ENCODE measurements at regions of chr9 and their contacts with region 1.

Region 1: DNA sequence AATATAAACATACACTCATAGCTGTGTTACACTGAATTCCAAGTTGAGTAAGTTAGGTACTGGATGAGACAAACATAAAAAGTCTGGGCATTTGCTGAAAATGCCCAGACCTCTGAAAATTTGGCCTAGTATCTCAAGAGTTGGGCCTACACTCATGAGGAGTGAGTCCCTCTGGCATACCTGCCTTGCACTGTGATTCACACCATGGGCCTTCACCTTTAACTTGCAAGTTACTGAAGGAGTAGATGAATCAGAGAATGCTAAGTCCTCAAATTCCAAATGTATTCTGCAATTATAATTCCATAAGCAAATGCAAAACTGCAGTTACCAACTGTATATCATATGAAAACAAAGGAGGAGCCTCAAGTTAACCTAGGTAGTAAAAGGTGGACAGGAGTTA is 32.3 kb upstream of the C9orf40 start:
- DNase-seq: peak; percentile 5
- ATAC-seq: no peak
- H3K4me3 ChIP-seq: no peak overlapping the region
- H3K27ac ChIP-seq: no peak overlapping the region
- H3K4me1 ChIP-seq: no peaks in the 10 kb centered on the region
- H3K27me3 ChIP-seq: no peaks in the 10 kb centered on the region
- CTCF ChIP-seq: no peak
- POLR2A ChIP-seq: no peak
- RAD21 ChIP-seq: no peak

Region 2: DNA sequence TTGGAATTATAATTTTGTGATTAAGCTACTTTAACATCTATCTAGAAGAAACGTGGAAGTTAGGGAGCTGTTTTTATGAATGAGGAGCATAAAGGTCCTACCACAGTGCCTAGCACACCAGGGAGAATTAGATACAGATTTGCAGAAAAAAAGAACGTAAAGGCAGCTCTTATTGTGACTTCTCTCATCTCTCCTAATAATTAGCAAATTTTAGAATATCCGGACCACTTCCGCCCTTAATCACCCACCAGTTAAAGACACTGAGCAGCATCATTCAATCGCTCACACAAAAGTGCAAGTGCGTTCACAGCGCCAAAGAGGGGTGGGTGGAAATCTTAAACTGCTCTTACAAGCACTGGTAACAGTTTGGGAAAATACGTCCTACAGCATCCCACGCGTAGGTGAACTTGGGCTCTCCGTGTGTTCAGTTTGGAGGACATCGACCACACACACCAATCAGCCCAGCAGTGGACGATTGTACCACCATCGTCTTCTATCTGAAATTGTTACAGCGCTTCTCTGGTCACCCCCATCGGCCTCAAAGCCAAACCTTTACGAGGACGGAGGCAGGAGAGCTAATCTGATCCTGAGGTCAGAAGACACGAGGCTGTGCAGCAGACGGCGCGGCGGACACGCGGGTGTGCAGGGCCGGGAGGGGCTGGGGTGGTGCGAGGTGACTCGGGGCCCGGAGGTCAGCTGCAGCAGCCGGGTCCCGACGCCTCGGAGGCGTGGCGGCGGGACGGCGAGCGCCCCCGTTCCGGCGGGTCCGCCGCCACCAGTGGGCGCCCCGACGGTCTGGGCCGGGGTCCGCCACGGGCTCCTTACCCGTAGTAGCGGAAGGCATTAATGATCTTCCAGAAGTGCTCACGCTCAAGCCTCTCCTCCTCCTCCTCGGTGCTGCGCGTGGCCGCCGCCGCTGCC is 42.4 kb after region 1 on chr9:
- CTCF ChIA-PET with region 1: no interaction called
- POLR2A ChIA-PET with region 1: no interaction called
- dilution Hi-C with region 1: no loop called
- in situ Hi-C with region 1: no loop called
- intact Hi-C with region 1: no loop called
- DNase-seq: peak; percentile 45
- ATAC-seq: peak; percentile 54
- H3K4me3 ChIP-seq: peak overlapping the region; percentile 58
- H3K27ac ChIP-seq: peak overlapping the region; percentile 72
- H3K4me1 ChIP-seq: no peaks in the 10 kb centered on the region; the same call in 1 of the 2 replicates
- H3K27me3 ChIP-seq: no peaks in the 10 kb centered on the region
- CTCF ChIP-seq: peak; percentile 33
- POLR2A ChIP-seq: no peak
- RAD21 ChIP-seq: no peak

Region 3: GRCh38 chr9:75064307-75065025 is 79.4 kb after region 1 on chr9:
- CTCF ChIA-PET with region 1: no interaction called
- POLR2A ChIA-PET with region 1: no interaction called
- dilution Hi-C with region 1: no loop called
- in situ Hi-C with region 1: no loop called
- intact Hi-C with region 1: no loop called
- DNase-seq: peak; percentile 72
- ATAC-seq: peak; percentile 75
- H3K4me3 ChIP-seq: no peak overlapping the region
- H3K27ac ChIP-seq: no peak overlapping the region
- H3K4me1 ChIP-seq: peaks cover 5% of the 10 kb centered on the region
- H3K27me3 ChIP-seq: no peaks in the 10 kb centered on the region
- CTCF ChIP-seq: no peak
- POLR2A ChIP-seq: no peak
- RAD21 ChIP-seq: no peak

Region 4: DNA sequence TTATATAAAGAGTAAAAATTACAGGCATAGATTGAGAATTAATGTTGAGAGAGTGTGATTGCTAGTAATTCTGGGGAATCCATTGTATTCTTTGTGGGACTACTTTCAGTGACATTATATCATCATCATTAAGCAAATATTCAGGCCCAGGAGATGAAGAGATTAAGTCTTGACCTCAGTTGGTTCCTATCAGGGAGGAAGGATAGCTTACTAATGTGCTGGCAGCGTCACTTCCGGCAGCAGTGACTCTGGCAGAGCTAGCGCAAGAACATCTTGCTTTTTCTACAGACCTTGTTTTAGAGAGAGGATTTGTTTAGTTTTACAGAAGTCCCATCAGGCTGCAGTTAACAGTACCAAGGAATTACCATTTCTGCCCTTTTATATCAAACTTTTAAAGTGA is 123.5 kb after region 1 on chr9:
- CTCF ChIA-PET with region 1: interaction called, 10 read pairs
- POLR2A ChIA-PET with region 1: no interaction called
- dilution Hi-C with region 1: no loop called
- in situ Hi-C with region 1: no loop called
- intact Hi-C with region 1: no loop called
- DNase-seq: peak; percentile 79
- ATAC-seq: peak; percentile 73
- H3K4me3 ChIP-seq: no peak overlapping the region
- H3K27ac ChIP-seq: no peak overlapping the region
- H3K4me1 ChIP-seq: peaks cover 2% of the 10 kb centered on the region; the same call in 1 of the 2 replicates
- H3K27me3 ChIP-seq: no peaks in the 10 kb centered on the region
- CTCF ChIP-seq: no peak
- POLR2A ChIP-seq: no peak
- RAD21 ChIP-seq: no peak

Region 5: GRCh38 chr9:75299324-75299723 is 314.3 kb after region 1 on chr9:
- CTCF ChIA-PET with region 1: no interaction called
- POLR2A ChIA-PET with region 1: no interaction called
- dilution Hi-C with region 1: no loop called
- in situ Hi-C with region 1: no loop called
- intact Hi-C with region 1: no loop called
- DNase-seq: no peak
- ATAC-seq: no peak
- H3K4me3 ChIP-seq: no peak overlapping the region
- H3K27ac ChIP-seq: no peak overlapping the region
- H3K4me1 ChIP-seq: no peaks in the 10 kb centered on the region
- H3K27me3 ChIP-seq: no peaks in the 10 kb centered on the region
- CTCF ChIP-seq: no peak
- POLR2A ChIP-seq: no peak
- RAD21 ChIP-seq: no peak